Activated CD8-positive, alpha-beta memory T cell treated with anti-CD3 and anti-CD28 coated beads, Interleukin-2, amount 10 ng/mL, durations not matched to agents 7 days and 5 days (primary cell): ENCODE measurements at regions of chr2 and their contacts with region 1.

Region 1: DNA sequence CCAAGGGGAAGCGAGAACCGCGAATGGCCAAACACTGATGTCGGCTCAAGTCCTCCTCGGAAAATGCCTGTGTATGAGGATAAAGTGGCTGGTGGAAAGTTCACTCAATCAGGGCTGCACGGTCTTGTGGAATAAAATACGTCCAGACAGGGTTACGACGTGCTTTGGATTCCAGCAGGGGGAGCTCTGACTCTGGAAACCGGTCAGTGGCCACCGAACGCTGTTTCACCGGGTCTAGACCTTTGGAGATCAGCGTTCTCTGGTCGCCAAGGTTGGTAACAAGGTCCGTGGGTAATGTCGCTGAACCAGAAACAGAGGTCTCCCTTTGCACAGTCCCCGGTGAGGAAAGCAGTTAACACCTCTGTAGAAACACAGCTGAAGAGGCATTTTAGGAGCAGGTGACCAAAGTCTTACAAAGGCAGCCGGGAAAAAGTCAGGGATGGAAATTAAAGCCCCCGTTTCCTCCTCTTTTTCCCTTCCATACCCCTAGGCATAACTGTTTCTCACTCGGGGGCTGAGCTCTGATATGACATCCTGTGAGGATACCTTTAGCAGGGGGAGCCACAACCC is 47.8 kb downstream of the CDCA7 start:
- DNase-seq: peak; percentile 82
- ATAC-seq: peak; percentile 89
- H3K4me3 Mint-ChIP-seq: no peak overlapping the region
- H3K27ac Mint-ChIP-seq: no peak overlapping the region
- H3K4me1 Mint-ChIP-seq: peaks cover 8% of the 10 kb centered on the region
- H3K27me3 Mint-ChIP-seq: peaks cover 66% of the 10 kb centered on the region

Region 2: GRCh38 chr2:173386021-173386737 is 16.3 kb before region 1 on chr2:
- CTCF ChIA-PET with region 1: no interaction called
- DNase-seq: no peak
- ATAC-seq: no peak
- H3K4me3 Mint-ChIP-seq: no peak overlapping the region
- H3K27ac Mint-ChIP-seq: no peak overlapping the region
- H3K4me1 Mint-ChIP-seq: no peaks in the 10 kb centered on the region
- H3K27me3 Mint-ChIP-seq: no peaks in the 10 kb centered on the region

Region 3: DNA sequence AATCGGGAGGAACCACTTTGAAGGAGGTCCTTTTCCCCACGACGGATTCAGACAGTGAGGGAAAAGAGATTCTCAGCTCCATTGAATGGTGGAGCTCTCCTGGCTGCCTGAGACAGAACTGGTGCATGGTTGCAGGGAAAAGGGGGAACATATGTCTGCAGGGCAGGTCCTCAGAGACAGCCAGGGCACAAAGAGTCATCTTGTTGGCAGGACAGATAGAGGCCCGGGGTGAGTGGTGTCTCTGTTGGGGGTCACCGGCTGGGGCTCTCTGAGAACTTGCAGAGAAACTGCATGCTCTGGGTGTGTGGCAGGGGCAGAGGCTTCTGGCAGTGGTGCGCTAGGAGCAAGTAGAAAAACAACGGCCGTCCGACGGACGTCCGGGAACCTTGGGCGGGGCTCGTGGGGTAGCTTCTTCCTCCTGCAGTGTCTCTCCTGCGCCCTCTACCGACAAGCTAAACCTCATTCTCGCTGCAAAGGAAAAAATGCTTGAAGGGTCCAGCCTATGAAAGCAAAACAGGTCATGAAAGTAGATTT is 46.5 kb after region 1 on chr2:
- CTCF ChIA-PET with region 1: interaction called, 11 read pairs
- DNase-seq: peak; percentile 84
- ATAC-seq: peak; percentile 79
- H3K4me3 Mint-ChIP-seq: peak overlapping the region; percentile 53
- H3K27ac Mint-ChIP-seq: peak overlapping the region; percentile 70
- H3K4me1 Mint-ChIP-seq: peaks cover 15% of the 10 kb centered on the region
- H3K27me3 Mint-ChIP-seq: peaks cover 35% of the 10 kb centered on the region